SK-N-SH (cell line): ENCODE measurements at regions of chr1 and their contacts with region 1.

Region 1: DNA sequence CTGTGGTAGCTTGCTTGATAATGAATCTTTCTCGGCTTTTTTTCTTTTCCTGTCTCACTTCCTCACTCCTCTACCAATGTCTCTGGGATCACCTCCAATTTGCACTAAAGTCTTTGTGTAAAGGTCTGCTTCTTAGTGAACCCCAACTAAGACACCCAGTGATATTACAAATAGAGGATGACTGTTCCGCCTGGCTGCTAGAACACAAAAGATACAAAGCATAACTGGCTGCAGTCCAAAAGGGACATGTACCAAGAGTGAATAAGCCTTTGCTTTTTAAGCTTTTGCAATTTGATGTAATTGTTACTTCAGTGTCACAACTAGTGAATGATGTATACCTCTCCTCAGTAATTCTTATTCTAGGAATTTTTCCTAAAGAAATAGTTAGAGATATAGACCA is 82.7 kb upstream of the BEND5 start:
- DNase-seq: no peak
- H3K4me3 ChIP-seq: no peak overlapping the region
- H3K27ac ChIP-seq: no peak overlapping the region
- H3K4me1 ChIP-seq: peaks cover 0 to 4% of the 10 kb centered on the region in 2 experiments; a peak in 1 of 4 replicates
- H3K27me3 ChIP-seq: no peaks in the 10 kb centered on the region
- CTCF ChIP-seq: no peak
- EP300 ChIP-seq: no peak
- RAD21 ChIP-seq: no peak

Region 2: DNA sequence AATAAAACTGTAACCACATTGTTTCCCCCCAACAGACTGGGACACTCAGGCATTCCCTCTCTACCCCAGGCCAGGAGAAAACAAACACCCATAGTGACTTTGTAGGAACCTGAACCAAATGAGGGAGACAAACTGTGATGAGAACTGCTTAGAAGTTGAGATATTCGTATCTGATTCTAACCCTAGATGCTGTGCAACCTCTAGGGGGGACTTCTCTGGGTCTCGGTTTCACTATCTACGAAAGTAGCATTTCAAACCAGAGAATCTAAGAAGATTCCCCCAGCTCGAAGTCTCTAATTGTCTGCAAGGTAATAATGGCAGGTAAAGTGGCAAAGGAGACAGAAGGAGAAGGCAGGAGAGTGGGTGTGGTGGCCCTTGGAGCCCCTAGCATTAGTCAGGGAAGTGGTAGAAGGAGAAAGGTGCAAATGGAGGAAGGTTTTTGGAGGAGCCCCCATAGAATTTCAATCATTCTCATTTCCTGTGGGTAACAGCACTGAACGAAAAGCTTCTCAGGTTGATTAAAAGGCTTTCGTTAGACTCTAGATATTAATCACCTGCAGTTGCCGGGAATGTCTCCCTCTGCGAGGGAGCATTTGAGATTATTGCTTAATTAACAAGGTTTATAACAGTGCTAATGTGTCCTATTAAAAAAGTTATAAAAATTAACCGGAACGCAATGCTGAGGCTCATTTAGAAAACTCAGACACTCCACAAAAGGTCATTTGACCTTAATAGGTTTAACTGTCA is 129.1 kb before region 1 on chr1:
- CTCF ChIA-PET with region 1: no interaction called
- POLR2A ChIA-PET with region 1: no interaction called
- DNase-seq: no peak
- H3K4me3 ChIP-seq: no peak overlapping the region
- H3K27ac ChIP-seq: no peak overlapping the region
- H3K4me1 ChIP-seq: peaks cover 0 to 2% of the 10 kb centered on the region in 2 experiments; a peak in 1 of 4 replicates
- H3K27me3 ChIP-seq: no peaks in the 10 kb centered on the region
- CTCF ChIP-seq: no peak
- EP300 ChIP-seq: no peak
- RAD21 ChIP-seq: no peak

Region 3: DNA sequence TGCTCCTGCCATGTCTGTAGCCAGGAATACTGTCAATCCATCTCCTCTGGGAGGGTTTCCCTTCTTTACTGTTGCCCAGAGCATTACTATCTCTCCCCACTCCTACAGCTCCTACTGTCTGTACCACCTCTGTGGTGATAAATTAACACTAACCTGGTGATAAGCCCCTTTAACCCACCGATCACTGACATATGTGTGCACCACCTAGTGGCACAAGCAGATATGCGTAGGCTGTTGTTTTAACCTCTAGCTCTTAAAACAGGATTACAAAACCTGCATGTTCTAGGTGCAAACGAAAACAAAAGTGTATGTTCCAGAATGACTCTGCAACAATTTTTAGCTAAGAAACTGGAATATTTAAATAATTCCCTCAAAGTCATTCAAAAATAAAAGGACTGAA is 11.2 kb after region 1 on chr1:
- CTCF ChIA-PET with region 1: interaction called, 11 read pairs
- POLR2A ChIA-PET with region 1: no interaction called
- DNase-seq: no peak
- H3K4me3 ChIP-seq: no peak overlapping the region
- H3K27ac ChIP-seq: no peak overlapping the region
- H3K4me1 ChIP-seq: peaks cover 3 to 16% of the 10 kb centered on the region in 2 experiments; a peak in 2 of 4 replicates
- H3K27me3 ChIP-seq: no peaks in the 10 kb centered on the region
- CTCF ChIP-seq: peak; percentile 75
- EP300 ChIP-seq: no peak
- RAD21 ChIP-seq: peak; percentile 56